AG04450 (cell line): ENCODE measurements at regions of chr2 and their contacts with region 1.

Region 1: DNA sequence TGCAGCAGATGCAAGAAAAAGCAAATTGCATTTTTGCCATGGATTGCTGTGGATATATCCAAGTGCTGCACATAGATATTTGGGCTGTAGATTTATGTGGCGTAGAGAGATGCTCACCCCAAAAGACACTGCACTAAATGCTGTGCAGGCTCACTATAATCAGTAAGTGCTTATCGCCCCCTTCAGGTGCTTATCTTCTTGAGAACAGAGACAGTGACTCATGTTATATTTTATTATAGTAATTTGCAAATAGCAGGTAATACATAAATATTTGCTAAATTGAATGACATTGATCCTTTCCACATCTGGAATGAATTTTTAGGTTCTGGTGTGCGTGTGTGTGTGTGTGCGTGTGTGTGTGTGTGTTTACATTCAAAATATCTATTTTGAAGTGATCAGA is 36.8 kb upstream of the PLEKHM3 start:
- DNase-seq: no peak
- H3K4me3 ChIP-seq: no peak overlapping the region
- H3K27ac ChIP-seq: no peak overlapping the region
- H3K27me3 ChIP-seq: no peaks in the 10 kb centered on the region
- CTCF ChIP-seq: peak; percentile 48

Region 2: DNA sequence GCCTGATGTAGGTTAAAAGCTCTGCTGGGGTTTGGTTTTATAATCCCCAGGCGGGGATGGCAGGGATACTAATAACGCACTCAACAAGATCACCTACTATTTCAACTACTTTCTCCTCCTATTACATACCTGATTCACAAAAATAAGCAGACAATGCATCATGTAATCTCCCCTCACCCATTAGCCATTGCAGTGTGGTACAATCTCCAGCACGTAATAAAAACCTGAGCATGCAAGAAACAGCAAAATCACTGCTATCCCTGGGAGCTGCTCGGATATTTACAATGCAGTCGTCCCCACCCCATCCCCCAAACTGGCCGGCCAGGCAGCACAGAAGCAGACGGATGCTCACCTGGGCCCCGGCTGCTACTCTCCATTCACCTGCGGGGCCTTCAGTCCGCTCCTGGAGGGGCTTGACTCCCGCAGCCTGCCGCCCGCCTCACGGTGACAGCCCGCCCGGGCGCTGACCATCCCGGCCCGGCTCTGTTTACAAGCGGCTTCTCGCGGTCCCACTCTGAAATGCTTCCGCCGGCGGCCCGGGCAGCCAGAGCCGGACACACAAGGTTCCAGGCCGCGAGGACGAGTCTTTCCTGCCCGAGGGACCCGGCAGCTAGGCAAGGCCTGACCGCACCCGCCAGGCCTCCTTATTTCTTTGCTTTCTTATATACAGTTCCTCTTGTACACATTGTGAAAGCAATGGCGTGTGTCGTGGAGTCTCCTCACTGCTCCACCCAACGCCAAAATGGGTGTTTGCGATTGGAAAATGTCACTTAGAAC is 36.9 kb before region 1 on chr2 and contains the start of gene PLEKHM3:
- CTCF ChIA-PET with region 1: interaction called, 4 read pairs
- POLR2A ChIA-PET with region 1: interaction called, 13 read pairs
- DNase-seq: peak; percentile 75
- H3K4me3 ChIP-seq: peak within 1 kb of the TSS; percentile 94
- H3K27ac ChIP-seq: peak within 1 kb of the TSS; percentile 73
- H3K27me3 ChIP-seq: no peaks in the 10 kb centered on the region
- CTCF ChIP-seq: no peak
- polyA plus RNA-seq, gene PLEKHM3: 5.3 and 7.0 TPM in 2 replicates

Region 3: GRCh38 chr2:208047840-208048239 is 14.3 kb before region 1 on chr2:
- CTCF ChIA-PET with region 1: no interaction called
- POLR2A ChIA-PET with region 1: no interaction called
- DNase-seq: no peak
- H3K4me3 ChIP-seq: no peak overlapping the region
- H3K27ac ChIP-seq: no peak overlapping the region
- H3K27me3 ChIP-seq: no peaks in the 10 kb centered on the region
- CTCF ChIP-seq: no peak